ENCODE measurements at regions of chr17 and their contacts with region 1.

Region 1: GRCh38 chr17:73429440-73430164 is 117.8 kb upstream of the CDC42EP4 start:
- DNase-seq: peak; percentile 90
- CTCF ChIP-seq: peak; percentile 95

Region 2: DNA sequence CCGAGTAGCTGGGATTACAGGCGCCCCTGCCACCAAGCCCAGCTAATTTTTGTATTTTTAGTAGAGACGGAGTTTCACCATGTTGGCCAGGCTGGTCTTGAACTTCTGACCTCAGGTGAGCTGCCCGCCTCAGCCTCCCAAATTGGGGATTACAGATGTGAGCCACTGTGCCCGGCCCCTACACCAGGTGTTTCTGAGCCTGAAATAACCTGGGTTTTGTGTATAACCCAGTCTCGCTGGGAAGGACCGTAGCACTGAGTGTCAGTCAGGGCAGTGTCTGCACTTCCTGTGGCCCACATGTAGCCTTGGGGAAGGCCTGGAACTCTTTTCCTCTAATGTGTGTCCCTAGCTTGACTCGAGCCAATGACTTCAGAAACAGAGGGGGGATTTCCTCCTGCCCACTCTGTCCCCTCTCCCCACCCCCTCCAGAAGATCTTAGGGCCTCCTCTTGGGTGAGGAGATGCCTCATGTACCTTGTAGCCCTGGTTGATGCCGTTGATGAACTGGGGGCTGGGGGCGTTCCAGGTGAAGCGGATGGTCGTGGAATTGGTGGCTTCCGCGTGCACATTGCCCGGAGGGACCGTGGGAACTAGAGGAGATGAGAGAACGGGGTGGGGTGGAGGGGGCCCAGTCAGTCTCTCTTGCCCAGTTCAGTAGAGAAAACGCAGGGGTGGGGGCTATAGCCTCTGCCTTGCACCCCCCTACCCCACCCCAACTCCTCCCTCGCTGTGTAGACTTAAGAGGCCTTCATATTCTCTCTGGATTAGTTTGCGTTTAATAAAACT is 15.2 kb before region 1 on chr17:
- CTCF ChIA-PET with region 1: interaction called, 10 read pairs
- POLR2A ChIA-PET with region 1: no interaction called
- DNase-seq: no peak
- CTCF ChIP-seq: no peak

Region 3: DNA sequence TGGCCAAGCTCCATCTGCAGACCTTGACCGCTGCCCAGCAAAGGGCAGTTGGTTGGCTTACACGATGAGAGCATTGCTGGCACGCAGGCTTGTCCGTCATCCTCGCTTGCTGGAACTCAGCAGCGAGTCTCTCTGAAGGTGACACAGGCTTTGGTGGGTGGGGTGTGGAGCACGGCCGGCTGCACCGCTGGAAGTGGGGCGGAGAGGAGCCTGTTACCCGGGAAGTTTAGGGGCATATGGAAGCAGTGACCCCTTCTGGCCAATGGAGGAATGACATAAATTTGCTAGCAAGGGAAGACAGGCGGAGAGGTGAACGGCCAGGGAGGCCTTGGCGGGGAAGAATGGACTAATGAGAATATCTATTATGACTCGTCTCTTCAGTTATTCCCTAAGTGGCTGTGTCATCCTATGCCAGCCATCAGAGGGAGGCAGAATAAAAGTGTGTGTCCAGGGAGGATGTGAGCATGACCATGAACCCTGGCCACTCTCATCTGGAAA is 280.5 kb after region 1 on chr17:
- CTCF ChIA-PET with region 1: interaction called, 46 read pairs
- POLR2A ChIA-PET with region 1: no interaction called
- DNase-seq: peak; percentile 76
- CTCF ChIP-seq: peak; percentile 69

Region 4: DNA sequence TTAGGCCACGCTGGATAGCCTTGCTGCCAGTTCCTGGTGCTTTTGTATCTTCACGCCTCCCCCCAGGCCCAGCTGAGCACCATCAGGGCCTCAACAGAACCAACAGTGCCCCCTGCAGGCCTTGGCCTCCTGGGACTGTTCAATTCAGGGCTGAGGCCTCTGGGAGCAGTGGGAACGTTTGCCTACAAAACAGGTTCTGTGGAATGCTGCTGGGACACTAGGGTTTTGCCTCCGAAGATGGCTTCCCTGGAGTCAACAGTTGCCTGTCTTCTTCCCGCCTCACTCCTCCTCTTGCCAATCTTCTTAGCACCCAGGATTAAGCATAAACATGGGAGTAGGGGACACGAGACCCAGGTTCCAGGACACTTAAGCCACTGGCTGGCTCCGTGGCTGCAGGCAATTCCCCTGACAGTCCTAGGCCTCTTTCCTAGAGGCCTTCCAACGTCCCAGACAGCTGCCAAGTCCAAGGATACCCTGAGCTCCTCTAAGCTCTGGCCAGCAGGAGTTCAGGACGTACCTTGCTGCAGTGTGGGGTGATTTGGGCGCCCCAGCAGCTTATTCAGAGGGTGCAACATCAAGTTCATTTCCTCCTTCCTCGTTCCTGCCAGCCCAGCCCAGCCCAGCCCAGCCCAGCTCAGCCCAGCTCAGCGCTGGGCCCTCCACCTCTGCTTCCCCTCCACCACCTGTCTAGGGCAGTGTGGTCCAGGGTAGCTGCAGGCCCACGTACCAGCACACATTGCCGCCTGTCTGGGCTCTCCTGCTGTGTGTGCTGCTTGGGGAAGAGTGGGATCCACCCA is 527.3 kb after region 1 on chr17:
- CTCF ChIA-PET with region 1: interaction called, 20 read pairs
- POLR2A ChIA-PET with region 1: no interaction called
- DNase-seq: peak; percentile 70
- CTCF ChIP-seq: peak; percentile 49

Region 5: GRCh38 chr17:73998653-73999645 is 569.3 kb after region 1 on chr17:
- CTCF ChIA-PET with region 1: interaction called, 15 read pairs
- POLR2A ChIA-PET with region 1: no interaction called
- DNase-seq: peak; percentile 77
- CTCF ChIP-seq: peak; percentile 76

Region 6: GRCh38 chr17:74176546-74177001 is 747.0 kb after region 1 on chr17:
- CTCF ChIA-PET with region 1: interaction called, 23 read pairs
- POLR2A ChIA-PET with region 1: no interaction called
- DNase-seq: peak; percentile 64
- CTCF ChIP-seq: peak; percentile 85